ENCODE measurements at regions of chr9 and their contacts with region 1.

Region 1: GRCh38 chr9:125374443-125375309 is 113.0 kb downstream of the GAPVD1 start:
- DNase-seq: peak; percentile 55 to 67
- H3K4me3 ChIP-seq: no peak overlapping the region
- H3K27ac ChIP-seq: no peak overlapping the region
- H3K4me1 ChIP-seq: peaks cover 5 to 14% of the 10 kb centered on the region in 2 donors
- H3K27me3 ChIP-seq: no peaks in the 10 kb centered on the region
- CTCF ChIP-seq: peak; percentile 52 to 84 (median 76)
- POLR2A ChIP-seq: no peak

Region 2: GRCh38 chr9:125255781-125256391 is 118.8 kb before region 1 on chr9:
- intact Hi-C with region 1: loop called (anchors 10 kb)
- DNase-seq: peak in 1 of 2 donors; percentile 30
- H3K4me3 ChIP-seq: no peak overlapping the region
- H3K27ac ChIP-seq: no peak overlapping the region
- H3K4me1 ChIP-seq: peaks cover 0 to 6% of the 10 kb centered on the region in 2 donors
- H3K27me3 ChIP-seq: no peaks in the 10 kb centered on the region
- CTCF ChIP-seq: peak in 4 of 6 experiments; percentile 19 to 64 (median 34)
- POLR2A ChIP-seq: no peak

Region 3: DNA sequence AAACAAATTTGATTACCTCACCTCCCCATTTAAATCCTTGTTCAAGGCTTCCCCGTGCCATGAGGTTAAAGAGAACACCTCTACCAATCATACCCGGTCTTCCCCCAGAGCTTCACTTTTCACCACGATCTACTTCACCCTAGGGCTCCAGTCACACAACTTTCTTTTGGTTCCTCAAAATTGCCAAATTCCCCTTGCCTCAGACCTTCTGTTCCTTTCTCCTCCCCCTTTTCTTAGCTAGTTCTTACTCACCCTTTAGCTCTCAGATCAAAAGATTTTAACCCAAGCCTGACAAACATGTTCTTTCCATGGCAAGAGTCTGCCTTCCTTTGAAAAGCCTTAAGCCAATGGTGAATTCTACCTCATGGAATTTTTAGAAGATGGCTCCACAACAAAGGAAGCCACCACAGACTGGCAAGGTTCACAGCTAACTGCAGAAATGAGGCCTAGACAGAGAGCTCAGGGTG is 275.6 kb after region 1 on chr9:
- intact Hi-C with region 1: no loop called
- DNase-seq: no peak
- H3K4me3 ChIP-seq: no peak overlapping the region
- H3K27ac ChIP-seq: no peak overlapping the region
- H3K4me1 ChIP-seq: peaks cover 3 to 18% of the 10 kb centered on the region in 2 donors
- H3K27me3 ChIP-seq: no peaks in the 10 kb centered on the region
- CTCF ChIP-seq: no peak
- POLR2A ChIP-seq: no peak